HEK293T (cell line): ENCODE measurements at regions of chr9 and their contacts with region 1.

Region 1: DNA sequence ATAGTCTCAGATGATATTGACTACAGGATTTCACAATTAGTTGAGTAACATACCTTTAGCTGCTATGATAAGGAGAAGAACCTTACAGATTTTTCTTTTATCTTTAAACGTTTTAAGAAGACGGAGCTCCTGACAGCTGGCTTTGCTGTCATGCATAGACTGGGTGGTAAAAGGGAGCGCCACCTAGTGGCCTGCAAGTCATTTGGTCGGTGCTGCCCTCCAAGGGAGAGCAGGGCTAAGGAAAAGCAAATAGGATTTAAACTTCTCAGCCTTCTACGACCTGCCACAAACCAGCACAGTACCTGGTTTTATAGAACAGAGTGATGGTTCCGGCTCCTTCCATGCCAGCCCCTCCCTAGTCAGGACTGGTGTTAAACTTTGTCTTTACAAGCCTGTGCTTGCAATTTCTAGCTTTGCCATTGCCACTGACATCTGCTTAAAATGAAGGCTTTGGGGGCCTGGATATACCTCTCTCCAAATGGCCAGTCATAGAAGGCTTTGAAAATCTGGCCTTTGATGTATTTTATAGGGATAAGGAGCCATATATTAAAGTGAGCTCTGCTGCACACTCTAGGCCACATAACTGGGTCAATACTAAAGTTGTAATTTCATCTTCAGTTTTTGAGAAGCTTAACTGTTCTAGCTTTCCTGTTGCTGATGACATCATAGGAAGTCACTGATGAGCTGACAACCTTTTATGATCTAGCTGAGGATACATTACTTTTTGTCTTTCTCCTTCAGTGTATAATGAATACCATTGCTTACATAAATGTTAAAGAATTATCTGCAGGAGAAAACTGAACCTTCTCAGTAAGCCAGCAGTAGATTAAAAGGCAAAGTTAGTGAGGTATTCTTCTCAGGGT is 31.1 kb upstream of the ADAMTSL1 start:
- DNase-seq: peak; percentile 88

Region 2: DNA sequence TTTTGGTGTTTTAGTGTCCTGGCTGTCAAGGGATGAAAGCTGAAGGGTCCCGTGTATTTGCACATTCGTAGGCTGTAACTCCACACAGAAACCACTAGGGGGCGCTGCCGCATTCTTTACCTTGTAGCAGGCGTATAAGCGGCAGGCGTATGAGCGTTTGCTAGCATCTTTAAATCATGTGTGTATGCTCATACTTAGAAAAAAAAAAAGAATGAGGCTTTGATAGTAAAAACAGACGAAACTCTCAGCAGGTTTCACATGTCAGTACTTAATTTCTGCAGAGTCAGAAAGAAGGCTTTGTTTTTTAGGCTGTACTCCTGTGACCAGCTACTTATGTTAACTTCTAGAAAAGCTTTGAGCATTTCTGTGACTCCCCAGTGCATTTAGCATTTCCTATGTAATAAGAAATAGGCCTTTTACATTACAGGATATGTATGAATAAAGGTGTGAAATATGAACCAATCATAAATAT is 187.7 kb before region 1 on chr9:
- CTCF ChIA-PET with region 1: interaction called, 14 read pairs
- POLR2A ChIA-PET with region 1: interaction called, 3 read pairs
- DNase-seq: peak; percentile 80